Caco-2 (cell line): ENCODE measurements at regions of chrX and their contacts with region 1.

Region 1: GRCh38 chrX:75603833-75604232 is 81.0 kb upstream of the ZDHHC15 start:
- DNase-seq: peak in 1 of 2 experiments; percentile 2
- H3K4me3 ChIP-seq: no peak overlapping the region
- H3K4me3 Mint-ChIP-seq: no peak overlapping the region
- H3K27ac Mint-ChIP-seq: no peak overlapping the region
- H3K4me1 ChIP-seq: no peaks in the 10 kb centered on the region
- H3K4me1 Mint-ChIP-seq: no peaks in the 10 kb centered on the region
- H3K27me3 ChIP-seq: no peaks in the 10 kb centered on the region
- H3K27me3 Mint-ChIP-seq: no peaks in the 10 kb centered on the region
- CTCF ChIP-seq: peak; percentile 21 to 33

Region 2: GRCh38 chrX:74550295-74550802 is 1053.5 kb before region 1 on chrX:
- CTCF ChIA-PET with region 1: no interaction called
- POLR2A ChIA-PET with region 1: no interaction called
- intact Hi-C with region 1: loop called (anchors 2 kb)
- DNase-seq: peak; percentile 63 to 80
- H3K4me3 ChIP-seq: no peak overlapping the region
- H3K4me3 Mint-ChIP-seq: no peak overlapping the region
- H3K27ac Mint-ChIP-seq: no peak overlapping the region
- H3K4me1 ChIP-seq: no peaks in the 10 kb centered on the region
- H3K4me1 Mint-ChIP-seq: no peaks in the 10 kb centered on the region
- H3K27me3 ChIP-seq: no peaks in the 10 kb centered on the region
- H3K27me3 Mint-ChIP-seq: no peaks in the 10 kb centered on the region
- CTCF ChIP-seq: peak; percentile 92 to 94

Region 3: DNA sequence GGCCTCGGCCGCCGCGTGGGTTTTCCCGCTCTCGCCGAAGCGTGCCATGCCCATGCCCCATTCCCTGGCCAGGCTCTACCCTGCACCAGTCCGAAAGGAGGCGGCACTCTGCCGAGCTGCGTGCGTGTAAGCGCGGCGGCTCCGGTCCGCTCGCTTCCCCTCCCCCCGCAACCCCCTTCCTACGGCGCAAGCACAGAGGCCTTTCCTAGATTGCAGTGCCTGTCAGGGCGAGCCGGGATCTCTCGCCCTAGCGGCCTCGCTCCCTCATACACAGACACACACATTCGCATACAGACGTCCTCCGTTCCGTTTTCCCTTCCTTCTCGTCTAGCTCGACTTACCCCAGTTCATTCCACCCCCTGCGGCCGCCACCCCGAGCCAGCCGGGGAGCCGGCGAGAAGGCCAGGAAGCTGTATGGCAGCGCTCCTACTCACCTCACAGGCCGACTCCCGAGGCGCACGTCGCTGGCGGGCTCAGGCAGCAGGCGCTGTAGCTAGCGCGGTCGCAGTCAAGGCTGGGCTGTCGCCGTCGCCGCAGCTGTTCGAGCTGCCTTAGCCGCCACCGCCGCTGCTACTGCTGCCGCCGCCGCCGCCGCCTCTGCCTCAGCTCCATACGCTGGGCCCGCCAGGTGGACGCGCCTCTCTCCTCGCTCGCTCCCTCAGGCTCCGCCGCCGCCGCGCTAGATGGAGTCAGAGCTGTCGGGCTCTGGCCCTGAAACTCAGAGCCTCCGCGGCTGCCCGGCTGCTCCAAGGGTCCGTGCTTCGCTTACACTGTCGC is 679.2 kb before region 1 on chrX:
- CTCF ChIA-PET with region 1: no interaction called
- POLR2A ChIA-PET with region 1: no interaction called
- intact Hi-C with region 1: loop called (anchors 10 kb)
- DNase-seq: peak; percentile 37 to 50
- H3K4me3 ChIP-seq: peak overlapping the region; percentile 38
- H3K4me3 Mint-ChIP-seq: peak overlapping the region; percentile 72
- H3K27ac Mint-ChIP-seq: no peak overlapping the region
- H3K4me1 ChIP-seq: no peaks in the 10 kb centered on the region
- H3K4me1 Mint-ChIP-seq: no peaks in the 10 kb centered on the region
- H3K27me3 ChIP-seq: no peaks in the 10 kb centered on the region
- H3K27me3 Mint-ChIP-seq: peaks cover 4% of the 10 kb centered on the region
- CTCF ChIP-seq: no peak